BJ (cell line): ENCODE measurements at regions of chr5 and their contacts with region 1.

Region 1: GRCh38 chr5:43168175-43168574 is 23.9 kb upstream of the NIM1K start:
- DNase-seq: no peak
- H3K4me3 ChIP-seq: no peak overlapping the region
- H3K27me3 ChIP-seq: no peaks in the 10 kb centered on the region
- CTCF ChIP-seq: no peak

Region 2: DNA sequence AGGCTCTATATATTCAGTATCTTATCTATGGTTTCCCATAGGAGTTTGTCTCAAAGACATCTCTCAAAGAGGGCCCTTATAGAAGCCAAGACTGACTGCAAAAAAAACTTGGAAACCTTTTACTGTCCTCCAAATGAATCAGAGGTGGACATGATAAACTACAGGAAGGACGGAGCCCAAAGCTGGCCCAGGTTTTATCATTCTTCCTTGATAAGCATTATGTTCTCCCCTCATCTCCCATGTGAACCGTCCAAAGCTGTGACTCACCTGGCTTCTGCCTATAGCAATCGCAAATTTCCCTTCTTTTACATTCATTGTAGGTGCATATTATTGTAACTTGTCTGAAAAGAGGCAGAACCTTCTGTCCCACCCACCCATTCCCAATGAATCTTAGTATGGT is 11.1 kb before region 1 on chr5:
- CTCF ChIA-PET with region 1: no interaction called
- POLR2A ChIA-PET with region 1: interaction called, 19 read pairs
- DNase-seq: no peak
- H3K4me3 ChIP-seq: no peak overlapping the region
- H3K27me3 ChIP-seq: no peaks in the 10 kb centered on the region
- CTCF ChIP-seq: no peak